ENCODE measurements at regions of chr2 and their contacts with region 1.

Region 1: DNA sequence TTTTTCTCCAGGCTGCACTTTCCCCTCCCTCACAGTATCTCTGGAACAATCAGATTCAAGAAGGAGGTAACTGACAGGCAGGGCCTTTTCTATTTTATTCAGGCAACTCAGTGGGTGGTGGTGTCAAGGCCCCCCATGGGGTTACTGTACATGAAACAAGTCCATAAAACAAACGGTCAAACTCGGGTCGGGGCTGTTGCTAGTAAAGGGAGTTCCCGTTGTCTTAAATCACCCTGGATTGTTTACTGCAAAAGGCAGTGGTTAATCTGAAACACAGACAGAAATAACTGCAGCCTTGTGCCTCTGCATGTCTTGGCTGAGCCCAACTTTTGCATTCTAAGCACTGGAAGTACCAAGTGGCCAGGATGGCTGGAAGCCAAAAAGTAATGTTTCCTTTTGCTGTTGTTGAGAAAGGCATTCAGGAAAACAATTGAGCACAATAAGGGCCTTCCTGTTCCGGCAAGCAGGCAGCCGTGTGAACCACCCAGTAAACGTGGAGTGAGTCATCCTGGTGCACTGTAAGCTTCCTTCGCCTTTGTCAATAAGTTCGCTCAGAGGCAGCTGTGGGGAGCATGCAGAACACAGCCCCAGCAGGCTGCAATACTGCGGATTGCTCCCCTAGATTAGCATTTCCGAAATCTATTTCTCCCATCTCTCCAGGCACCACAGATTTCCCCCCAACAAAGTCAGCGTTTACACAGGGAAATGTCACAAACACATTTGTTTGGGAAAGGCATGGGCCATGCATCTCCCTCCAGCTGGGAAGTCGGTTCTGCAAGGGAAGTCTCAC is 149.6 kb downstream of the IRS1 start:
- DNase-seq: peak; percentile 80 to 88
- H3K4me3 ChIP-seq: no peak overlapping the region
- H3K27ac ChIP-seq: peak overlapping the region; percentile 92
- H3K4me1 ChIP-seq: peaks cover 45% of the 10 kb centered on the region
- H3K27me3 ChIP-seq: no peaks in the 10 kb centered on the region
- CTCF ChIP-seq: no peak

Region 2: GRCh38 chr2:225602205-225602604 is 1047.9 kb before region 1 on chr2:
- CTCF ChIA-PET with region 1: no interaction called
- POLR2A ChIA-PET with region 1: no interaction called
- intact Hi-C with region 1: no loop called
- DNase-seq: no peak
- H3K4me3 ChIP-seq: no peak overlapping the region
- H3K27ac ChIP-seq: no peak overlapping the region
- H3K4me1 ChIP-seq: no peaks in the 10 kb centered on the region
- H3K27me3 ChIP-seq: no peaks in the 10 kb centered on the region
- CTCF ChIP-seq: no peak

Region 3: DNA sequence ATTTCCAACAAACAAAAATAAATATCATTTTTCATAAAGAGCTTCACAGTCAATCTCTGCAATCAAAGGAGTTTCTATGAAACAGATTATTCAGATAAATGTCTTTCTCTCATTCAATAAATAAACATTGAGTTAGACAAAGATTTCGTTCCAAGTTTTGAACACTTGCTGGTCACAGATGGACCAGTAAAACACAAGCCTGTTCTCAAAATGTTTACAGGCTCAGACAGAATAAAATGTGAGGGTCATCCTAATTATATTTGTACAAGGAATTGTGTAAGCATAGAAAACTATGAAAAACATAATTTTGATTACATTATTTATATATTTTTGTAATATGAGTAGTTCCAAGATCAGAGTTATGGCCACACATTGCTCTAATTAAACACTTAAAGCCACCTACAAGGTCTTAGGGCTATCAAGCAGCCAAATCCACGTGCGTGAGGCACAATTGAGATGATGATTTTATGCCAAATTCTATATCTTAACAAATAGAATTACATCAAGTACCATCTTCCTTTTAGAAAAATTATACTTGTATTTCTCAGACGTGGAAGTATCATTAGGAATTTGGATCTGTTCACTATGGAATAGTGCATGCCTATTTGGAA is 806.4 kb before region 1 on chr2:
- CTCF ChIA-PET with region 1: no interaction called
- POLR2A ChIA-PET with region 1: no interaction called
- intact Hi-C with region 1: no loop called
- DNase-seq: no peak
- H3K4me3 ChIP-seq: no peak overlapping the region
- H3K27ac ChIP-seq: no peak overlapping the region
- H3K4me1 ChIP-seq: no peaks in the 10 kb centered on the region
- H3K27me3 ChIP-seq: no peaks in the 10 kb centered on the region
- CTCF ChIP-seq: no peak

Region 4: DNA sequence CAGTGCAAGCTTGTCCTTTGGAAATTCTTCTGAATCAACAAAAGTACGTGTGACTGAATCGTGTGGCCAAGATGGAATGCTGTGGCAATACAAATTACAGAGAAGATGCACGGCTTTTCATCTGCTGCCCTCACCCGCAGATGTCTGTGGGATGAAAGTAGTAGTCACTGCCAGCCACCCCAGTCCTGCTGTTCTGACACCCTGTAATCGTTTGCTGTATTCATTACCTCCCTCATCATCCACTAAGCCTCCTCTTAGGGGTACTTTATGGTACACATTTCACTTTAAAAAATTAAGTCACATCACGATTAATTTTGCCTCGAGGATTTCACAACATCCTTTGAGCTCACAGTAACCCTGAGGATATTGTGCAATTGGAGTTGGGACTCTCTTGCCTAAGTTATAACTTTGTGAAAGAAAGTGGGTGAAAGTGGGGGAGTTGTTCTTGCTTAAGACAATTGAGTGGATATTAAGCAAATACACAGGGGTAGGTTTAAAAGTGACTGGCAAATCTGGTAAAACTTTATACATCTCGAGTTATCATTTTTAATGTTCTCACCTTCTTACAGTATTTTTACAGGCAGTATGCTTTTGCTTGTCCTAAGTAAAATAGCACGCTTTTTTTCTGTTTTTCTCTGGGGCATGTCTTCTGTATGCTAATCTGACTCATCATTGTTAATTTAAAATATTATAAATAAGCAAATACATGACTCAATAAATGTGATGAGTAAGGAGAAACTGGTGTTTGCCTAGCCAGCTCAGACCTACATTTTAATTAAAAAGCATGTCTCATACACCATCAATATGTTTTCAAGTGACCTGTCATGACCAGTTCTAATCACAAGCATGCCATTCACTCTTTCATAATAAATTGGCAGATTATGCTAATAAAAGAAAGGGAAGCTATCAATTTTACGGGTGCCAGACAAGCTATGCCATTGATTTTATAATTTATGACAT is 531.3 kb before region 1 on chr2:
- CTCF ChIA-PET with region 1: no interaction called
- POLR2A ChIA-PET with region 1: no interaction called
- intact Hi-C with region 1: loop called (anchors 5 kb)
- DNase-seq: peak; percentile 33 to 92
- H3K4me3 ChIP-seq: peak overlapping the region; percentile 27; the same call in 1 of the 2 replicates
- H3K27ac ChIP-seq: peak overlapping the region; percentile 93
- H3K4me1 ChIP-seq: peaks cover 64% of the 10 kb centered on the region
- H3K27me3 ChIP-seq: no peaks in the 10 kb centered on the region
- CTCF ChIP-seq: no peak

Region 5: GRCh38 chr2:226185616-226186211 is 464.4 kb before region 1 on chr2:
- CTCF ChIA-PET with region 1: interaction called, 4 read pairs
- POLR2A ChIA-PET with region 1: no interaction called
- intact Hi-C with region 1: loop called (anchors 5 kb)
- DNase-seq: peak; percentile 26 to 70
- H3K4me3 ChIP-seq: no peak overlapping the region
- H3K27ac ChIP-seq: peak overlapping the region; percentile 77
- H3K4me1 ChIP-seq: peaks cover 19% of the 10 kb centered on the region
- H3K27me3 ChIP-seq: no peaks in the 10 kb centered on the region
- CTCF ChIP-seq: no peak

Region 6: GRCh38 chr2:226334981-226335720 is 314.9 kb before region 1 on chr2:
- CTCF ChIA-PET with region 1: no interaction called
- POLR2A ChIA-PET with region 1: no interaction called
- intact Hi-C with region 1: loop called (anchors 5 kb)
- DNase-seq: peak in 1 of 2 experiments; percentile 29
- H3K4me3 ChIP-seq: no peak overlapping the region
- H3K27ac ChIP-seq: no peak overlapping the region
- H3K4me1 ChIP-seq: peaks cover 16% of the 10 kb centered on the region
- H3K27me3 ChIP-seq: no peaks in the 10 kb centered on the region
- CTCF ChIP-seq: no peak

Region 7: DNA sequence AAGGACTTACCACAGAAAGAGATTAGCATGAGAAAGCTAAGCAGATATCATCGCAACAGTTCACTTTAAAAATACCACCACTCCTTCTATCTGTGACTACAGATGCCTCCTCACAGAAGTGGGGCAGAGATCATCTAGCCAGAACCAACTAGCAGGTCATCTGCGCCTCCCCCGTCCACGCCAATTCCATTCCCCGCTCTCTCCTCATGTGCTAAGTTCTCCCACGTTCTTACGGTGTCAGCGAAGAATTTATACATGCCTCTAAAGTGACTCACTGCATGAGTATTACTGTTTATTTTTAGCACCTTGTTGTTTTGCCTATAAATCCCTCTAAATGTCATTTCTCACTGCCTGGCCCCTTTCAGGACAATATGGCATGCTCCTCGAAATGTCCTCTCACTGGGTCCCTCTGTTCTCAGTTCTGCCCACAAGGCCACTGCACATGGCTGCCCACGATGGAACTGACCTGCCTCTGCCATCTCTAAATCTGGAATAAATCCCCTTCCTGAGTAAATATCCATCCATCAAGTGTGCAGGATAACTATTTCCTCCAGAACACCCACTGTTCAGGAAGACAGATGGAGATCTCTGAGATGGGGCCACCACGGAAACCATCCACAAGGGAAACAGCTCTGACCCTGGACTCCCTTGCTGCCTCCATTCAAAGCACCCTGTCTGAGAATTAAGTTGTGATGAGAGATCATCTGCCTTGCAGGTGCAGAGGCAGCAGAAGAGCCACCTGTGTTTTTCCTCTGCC is 11.9 kb after region 1 on chr2:
- CTCF ChIA-PET with region 1: no interaction called
- POLR2A ChIA-PET with region 1: no interaction called
- intact Hi-C with region 1: loop called (anchors 1 kb)
- DNase-seq: peak; percentile 81 to 95
- H3K4me3 ChIP-seq: peak overlapping the region; percentile 14; the same call in 1 of the 2 replicates
- H3K27ac ChIP-seq: peak overlapping the region; percentile 92
- H3K4me1 ChIP-seq: peaks cover 27% of the 10 kb centered on the region
- H3K27me3 ChIP-seq: no peaks in the 10 kb centered on the region
- CTCF ChIP-seq: no peak

Region 8: DNA sequence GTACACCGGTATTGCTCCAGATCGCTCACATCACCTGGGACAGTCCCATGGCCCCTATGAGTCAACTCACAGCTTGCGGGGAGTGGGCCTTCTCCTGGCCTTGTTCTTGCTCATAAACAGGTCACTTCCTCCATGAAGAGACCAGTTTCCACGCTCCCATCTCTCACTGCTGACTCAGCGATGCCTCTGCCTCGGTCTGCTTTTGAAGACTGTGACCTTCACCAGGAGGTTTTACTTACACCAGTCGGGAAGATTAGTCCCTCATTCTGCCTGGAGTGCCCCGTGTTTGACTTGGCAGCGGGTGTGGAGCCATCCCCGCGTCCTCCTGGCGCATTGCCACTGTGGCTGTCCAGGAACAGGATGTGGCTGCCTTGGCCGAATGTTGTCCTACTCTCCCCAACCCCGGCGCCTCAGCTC is 345.6 kb after region 1 on chr2:
- CTCF ChIA-PET with region 1: no interaction called
- POLR2A ChIA-PET with region 1: no interaction called
- intact Hi-C with region 1: no loop called
- DNase-seq: no peak
- H3K4me3 ChIP-seq: no peak overlapping the region
- H3K27ac ChIP-seq: no peak overlapping the region
- H3K4me1 ChIP-seq: no peaks in the 10 kb centered on the region
- H3K27me3 ChIP-seq: no peaks in the 10 kb centered on the region
- CTCF ChIP-seq: no peak